PC-3 (cell line): ENCODE measurements at regions of chr11 and their contacts with region 1.

Region 1: GRCh38 chr11:85086547-85087276 is 540.4 kb downstream of the DLG2 start:
- DNase-seq: peak; percentile 99
- ATAC-seq: peak; percentile 95
- H3K4me3 ChIP-seq: peak overlapping the region; percentile 26
- H3K27ac ChIP-seq: peak overlapping the region; percentile 63
- H3K4me1 ChIP-seq: peaks cover 30% of the 10 kb centered on the region
- H3K27me3 ChIP-seq: no peaks in the 10 kb centered on the region
- CTCF ChIP-seq: no peak

Region 2: GRCh38 chr11:84800755-84801346 is 285.9 kb before region 1 on chr11:
- CTCF ChIA-PET with region 1: no interaction called
- POLR2A ChIA-PET with region 1: no interaction called
- intact Hi-C with region 1: loop called (anchors 5 kb)
- DNase-seq: peak; percentile 83
- ATAC-seq: peak; percentile 62
- H3K4me3 ChIP-seq: no peak overlapping the region
- H3K27ac ChIP-seq: no peak overlapping the region
- H3K4me1 ChIP-seq: peaks cover 12% of the 10 kb centered on the region
- H3K27me3 ChIP-seq: 0 out of 2 replicates have a peak, but pooled peaks cover 6% of the 10 kb centered on the region
- CTCF ChIP-seq: peak; percentile 88

Region 3: DNA sequence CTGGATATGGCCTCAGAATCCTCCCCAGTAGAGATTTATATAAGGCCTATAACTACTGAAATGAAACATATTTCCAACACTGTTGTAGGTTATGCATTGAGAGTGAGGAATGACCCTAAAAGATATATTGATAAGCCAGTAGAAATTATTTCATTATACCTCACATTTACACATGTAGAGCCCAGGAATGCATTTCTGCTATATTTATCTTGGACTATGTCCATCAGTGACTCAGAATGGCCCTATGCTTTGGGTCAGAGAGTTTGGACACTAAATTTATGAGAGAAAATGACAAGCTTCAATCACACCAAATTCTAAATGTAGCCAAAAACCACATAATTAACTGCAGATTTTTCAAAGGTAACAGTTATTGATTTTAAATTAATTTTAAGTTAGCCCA is 221.5 kb before region 1 on chr11:
- CTCF ChIA-PET with region 1: no interaction called
- POLR2A ChIA-PET with region 1: no interaction called
- intact Hi-C with region 1: loop called (anchors 1 kb)
- DNase-seq: peak; percentile 91
- ATAC-seq: peak; percentile 25
- H3K4me3 ChIP-seq: no peak overlapping the region
- H3K27ac ChIP-seq: 0 out of 2 replicates have a peak overlapping the region, but pooled peaks have one; percentile 80
- H3K4me1 ChIP-seq: peaks cover 53% of the 10 kb centered on the region
- H3K27me3 ChIP-seq: no peaks in the 10 kb centered on the region
- CTCF ChIP-seq: no peak

Region 4: GRCh38 chr11:84993386-84993785 is 93.3 kb before region 1 on chr11:
- CTCF ChIA-PET with region 1: no interaction called
- POLR2A ChIA-PET with region 1: no interaction called
- intact Hi-C with region 1: loop called (anchors 2 kb)
- DNase-seq: peak; percentile 63
- ATAC-seq: peak; percentile 76
- H3K4me3 ChIP-seq: no peak overlapping the region
- H3K27ac ChIP-seq: no peak overlapping the region
- H3K4me1 ChIP-seq: no peaks in the 10 kb centered on the region
- H3K27me3 ChIP-seq: no peaks in the 10 kb centered on the region
- CTCF ChIP-seq: peak; percentile 88

Region 5: GRCh38 chr11:85029911-85030332 is 56.8 kb before region 1 on chr11:
- CTCF ChIA-PET with region 1: no interaction called
- POLR2A ChIA-PET with region 1: no interaction called
- intact Hi-C with region 1: loop called (anchors 1 kb)
- DNase-seq: peak; percentile 97
- ATAC-seq: peak; percentile 93
- H3K4me3 ChIP-seq: 0 out of 2 replicates have a peak overlapping the region, but pooled peaks have one; percentile 11
- H3K27ac ChIP-seq: peak overlapping the region; percentile 45
- H3K4me1 ChIP-seq: peaks cover 13% of the 10 kb centered on the region
- H3K27me3 ChIP-seq: 0 out of 2 replicates have a peak, but pooled peaks cover 2% of the 10 kb centered on the region
- CTCF ChIP-seq: no peak

Region 6: GRCh38 chr11:85062320-85063058 is 24.2 kb before region 1 on chr11:
- CTCF ChIA-PET with region 1: no interaction called
- POLR2A ChIA-PET with region 1: no interaction called
- intact Hi-C with region 1: no loop called
- DNase-seq: no peak
- ATAC-seq: peak; percentile 35; the same call in 1 of the 2 replicates
- H3K4me3 ChIP-seq: no peak overlapping the region
- H3K27ac ChIP-seq: no peak overlapping the region
- H3K4me1 ChIP-seq: no peaks in the 10 kb centered on the region
- H3K27me3 ChIP-seq: no peaks in the 10 kb centered on the region
- CTCF ChIP-seq: no peak

Region 7: GRCh38 chr11:85114786-85115185 is 28.1 kb after region 1 on chr11:
- CTCF ChIA-PET with region 1: no interaction called
- POLR2A ChIA-PET with region 1: no interaction called
- intact Hi-C with region 1: loop called (anchors 1 kb)
- DNase-seq: peak; percentile 84
- ATAC-seq: peak; percentile 85
- H3K4me3 ChIP-seq: no peak overlapping the region
- H3K27ac ChIP-seq: no peak overlapping the region
- H3K4me1 ChIP-seq: peaks cover 22% of the 10 kb centered on the region
- H3K27me3 ChIP-seq: no peaks in the 10 kb centered on the region
- CTCF ChIP-seq: no peak

Region 8: DNA sequence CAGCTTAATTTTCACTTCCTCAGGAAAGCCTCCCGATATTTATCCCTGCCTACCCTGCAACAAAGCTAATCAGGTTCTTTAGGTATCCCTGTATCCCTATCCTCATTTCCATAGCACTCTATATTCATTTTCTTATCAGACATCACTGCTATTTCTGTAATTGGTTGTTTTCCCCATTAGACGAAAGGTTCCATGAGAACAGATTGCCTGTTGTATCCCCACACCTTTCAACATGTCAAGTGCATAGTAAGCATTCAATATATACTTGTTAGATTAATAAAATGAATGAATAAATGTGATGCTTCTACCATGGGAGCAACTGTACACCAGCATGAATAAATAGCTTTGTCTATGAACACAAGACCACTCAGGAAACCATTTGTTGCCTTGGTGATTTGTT is 40.6 kb after region 1 on chr11:
- CTCF ChIA-PET with region 1: no interaction called
- POLR2A ChIA-PET with region 1: no interaction called
- intact Hi-C with region 1: no loop called
- DNase-seq: no peak
- ATAC-seq: no peak
- H3K4me3 ChIP-seq: no peak overlapping the region
- H3K27ac ChIP-seq: no peak overlapping the region
- H3K4me1 ChIP-seq: no peaks in the 10 kb centered on the region
- H3K27me3 ChIP-seq: no peaks in the 10 kb centered on the region
- CTCF ChIP-seq: no peak

Region 9: DNA sequence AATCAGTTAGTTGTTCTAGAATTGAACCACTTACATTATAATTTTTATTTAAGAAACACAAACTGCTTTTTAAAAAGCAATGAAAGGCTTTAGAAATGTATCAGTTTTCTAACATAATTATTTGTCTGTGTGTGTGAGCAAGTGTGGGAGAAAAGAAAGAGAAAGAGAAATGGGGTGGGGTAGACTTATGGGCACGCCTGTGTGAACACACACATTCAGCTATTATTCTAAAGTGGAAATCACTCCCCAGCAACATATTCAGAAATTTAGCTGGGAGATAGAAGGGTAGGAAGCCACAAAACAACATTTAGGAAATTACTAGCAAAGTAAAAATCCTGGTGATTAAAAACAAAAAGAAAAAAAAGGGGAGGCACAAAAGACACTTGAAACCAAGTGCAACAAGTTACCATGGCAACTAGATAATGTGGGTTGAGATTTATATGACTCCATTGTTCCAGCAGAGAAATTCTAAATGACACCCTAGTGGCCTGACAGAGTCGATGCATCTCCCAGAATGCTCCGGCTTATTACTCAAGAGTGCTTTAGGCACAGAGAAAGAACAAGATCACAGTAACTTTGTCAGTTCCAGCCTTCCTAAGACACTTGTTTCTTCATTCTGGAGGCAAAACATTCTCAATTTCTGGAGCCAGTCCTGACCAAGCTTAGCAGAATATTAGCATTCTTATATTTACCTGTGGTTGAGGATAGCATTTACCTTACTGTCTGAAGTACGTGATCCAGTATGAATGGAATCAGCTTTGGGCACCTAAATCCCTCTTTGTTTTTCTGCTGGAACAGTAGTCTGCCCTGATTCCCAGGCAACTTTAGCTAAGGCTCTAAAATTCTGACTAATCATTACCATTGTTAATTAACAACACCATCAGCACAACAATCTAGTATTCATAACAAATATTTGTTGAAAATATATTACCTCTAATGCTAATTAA is 96.0 kb after region 1 on chr11:
- CTCF ChIA-PET with region 1: no interaction called
- POLR2A ChIA-PET with region 1: no interaction called
- intact Hi-C with region 1: loop called (anchors 2 kb)
- DNase-seq: peak; percentile 75
- ATAC-seq: peak; percentile 64; the same call in 1 of the 2 replicates
- H3K4me3 ChIP-seq: no peak overlapping the region
- H3K27ac ChIP-seq: no peak overlapping the region
- H3K4me1 ChIP-seq: no peaks in the 10 kb centered on the region
- H3K27me3 ChIP-seq: no peaks in the 10 kb centered on the region
- CTCF ChIP-seq: peak; percentile 76

Region 10: GRCh38 chr11:85196968-85197367 is 110.3 kb after region 1 on chr11:
- CTCF ChIA-PET with region 1: no interaction called
- POLR2A ChIA-PET with region 1: no interaction called
- intact Hi-C with region 1: no loop called
- DNase-seq: no peak
- ATAC-seq: no peak
- H3K4me3 ChIP-seq: no peak overlapping the region
- H3K27ac ChIP-seq: no peak overlapping the region
- H3K4me1 ChIP-seq: no peaks in the 10 kb centered on the region
- H3K27me3 ChIP-seq: no peaks in the 10 kb centered on the region
- CTCF ChIP-seq: no peak

Region 11: GRCh38 chr11:85572056-85572455 is 485.3 kb after region 1 on chr11:
- CTCF ChIA-PET with region 1: no interaction called
- POLR2A ChIA-PET with region 1: no interaction called
- intact Hi-C with region 1: no loop called
- DNase-seq: no peak
- ATAC-seq: no peak
- H3K4me3 ChIP-seq: no peak overlapping the region
- H3K27ac ChIP-seq: no peak overlapping the region
- H3K4me1 ChIP-seq: no peaks in the 10 kb centered on the region
- H3K27me3 ChIP-seq: no peaks in the 10 kb centered on the region; the same call in 1 of the 2 replicates
- CTCF ChIP-seq: no peak